Heart right ventricle (tissue), 16 donors: ENCODE measurements at regions of chr5 and their contacts with region 1.

Region 1: DNA sequence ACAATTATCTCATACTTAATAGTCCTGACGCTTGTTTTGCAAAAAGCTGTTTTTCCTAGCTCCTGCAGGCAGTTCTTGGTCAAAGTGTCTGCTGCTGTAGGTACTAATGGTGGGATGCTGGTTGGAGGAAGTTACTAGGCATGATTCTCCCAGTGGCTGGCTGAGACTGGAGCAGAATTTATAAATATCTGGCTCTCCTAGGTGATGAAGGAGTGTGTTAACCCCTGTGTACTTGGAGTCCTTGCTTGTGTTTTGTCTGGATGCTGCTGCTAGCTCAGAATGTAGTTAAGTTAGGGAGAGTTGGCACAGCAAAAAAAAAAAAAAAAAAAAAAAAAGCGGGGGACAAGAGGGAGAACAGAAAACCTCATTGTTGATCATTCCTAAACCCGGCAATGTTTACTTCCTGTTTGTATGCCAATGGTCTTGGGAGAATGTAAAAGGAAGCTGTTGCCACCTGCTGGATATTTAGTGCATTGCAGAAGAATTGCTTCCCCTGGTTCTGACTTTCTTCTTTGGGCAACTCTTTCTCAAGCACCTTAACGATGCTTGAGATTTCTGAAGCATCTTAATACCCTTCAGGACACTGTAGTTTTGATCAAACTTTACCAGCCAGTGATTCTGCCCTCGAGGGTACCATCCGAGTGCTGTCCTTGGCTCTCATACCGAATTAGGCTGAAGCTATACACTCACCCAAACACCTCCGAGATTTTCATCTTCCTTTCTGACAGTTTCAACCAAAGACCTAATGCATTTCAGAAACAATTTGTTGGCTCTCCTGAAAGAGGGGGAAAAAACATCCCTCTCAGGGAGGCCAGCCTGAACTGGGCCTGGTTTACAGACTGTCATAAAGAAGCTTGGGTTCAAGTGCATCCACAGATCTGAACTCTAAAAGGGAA is 71.7 kb upstream of the WWC1 start:
- DNase-seq: peak in 1 of 2 donors; percentile 57
- ATAC-seq: peak in 7 of 8 donors; percentile 54 to 67 (median 63)
- H3K4me3 ChIP-seq: peak overlapping the region in 3 of 10 donors; percentile 17 to 21 (median 18)
- H3K27ac ChIP-seq: no peak overlapping the region
- H3K4me1 ChIP-seq: peaks cover 0 to 33% (median 12%) of the 10 kb centered on the region in 9 donors
- H3K27me3 ChIP-seq: no peaks in the 10 kb centered on the region
- CTCF ChIP-seq: peak; percentile 63 to 91 (median 88)

Region 2: GRCh38 chr5:167582283-167582682 is 637.5 kb before region 1 on chr5:
- intact Hi-C with region 1: loop called in 5 of 10 experiments (anchors 5 to 10 kb)
- DNase-seq: no peak
- ATAC-seq: no peak
- H3K4me3 ChIP-seq: no peak overlapping the region
- H3K27ac ChIP-seq: no peak overlapping the region
- H3K4me1 ChIP-seq: peaks cover 0 to 8% (median 0%) of the 10 kb centered on the region in 9 donors
- H3K27me3 ChIP-seq: peaks cover 0 to 27% (median 12%) of the 10 kb centered on the region in 7 donors
- CTCF ChIP-seq: peak in 4 of 9 donors; percentile 10 to 45 (median 22)

Region 3: DNA sequence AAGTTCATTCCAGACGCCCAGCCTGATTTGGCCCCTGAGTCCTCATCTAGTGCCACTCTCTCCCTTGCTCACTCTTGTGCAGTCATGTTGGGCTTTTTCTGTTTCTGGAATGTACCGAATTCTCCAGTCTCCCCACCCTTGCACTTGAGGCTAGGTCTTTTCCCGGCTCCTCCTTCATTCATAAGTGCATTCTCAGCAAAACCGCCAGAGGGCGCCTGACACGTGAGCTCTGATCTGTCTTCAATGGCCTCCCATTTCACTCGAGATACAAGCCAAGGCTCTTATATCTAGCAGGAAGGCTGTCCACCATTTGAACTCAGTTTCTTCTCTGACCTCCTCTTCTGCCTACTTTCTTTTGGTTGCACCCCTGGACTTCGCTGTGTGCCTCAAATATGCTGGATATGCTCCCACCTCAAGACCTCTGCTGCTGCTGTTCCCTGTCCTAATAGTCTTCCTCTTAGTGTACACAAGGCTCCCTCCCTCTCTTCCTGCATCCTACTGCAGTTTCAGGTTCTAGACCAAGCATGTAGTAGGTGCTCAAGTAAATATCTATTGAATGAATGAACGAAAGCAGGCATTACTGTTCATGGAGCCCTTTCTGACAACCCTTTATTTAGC is 496.4 kb before region 1 on chr5:
- intact Hi-C with region 1: loop called in 8 of 10 experiments (anchors 2 to 10 kb)
- DNase-seq: peak; percentile 61 to 68
- ATAC-seq: peak; percentile 72 to 94 (median 86)
- H3K4me3 ChIP-seq: no peak overlapping the region
- H3K27ac ChIP-seq: no peak overlapping the region
- H3K4me1 ChIP-seq: peaks cover 0 to 6% (median 0%) of the 10 kb centered on the region in 9 donors
- H3K27me3 ChIP-seq: no peaks in the 10 kb centered on the region
- CTCF ChIP-seq: peak; percentile 70 to 93 (median 88)

Region 4: GRCh38 chr5:168114444-168115017 is 105.2 kb before region 1 on chr5:
- intact Hi-C with region 1: loop called in 6 of 10 experiments (anchors 5 to 10 kb)
- DNase-seq: peak; percentile 21 to 28
- ATAC-seq: peak in 7 of 8 donors; percentile 52 to 84 (median 73)
- H3K4me3 ChIP-seq: no peak overlapping the region
- H3K27ac ChIP-seq: no peak overlapping the region
- H3K4me1 ChIP-seq: no peaks in the 10 kb centered on the region
- H3K27me3 ChIP-seq: no peaks in the 10 kb centered on the region
- CTCF ChIP-seq: peak in 8 of 9 donors; percentile 28 to 71 (median 56)